Upper lobe of right lung (tissue), 1 donor: ENCODE measurements at regions of chr3 and their contacts with region 1.

Region 1: DNA sequence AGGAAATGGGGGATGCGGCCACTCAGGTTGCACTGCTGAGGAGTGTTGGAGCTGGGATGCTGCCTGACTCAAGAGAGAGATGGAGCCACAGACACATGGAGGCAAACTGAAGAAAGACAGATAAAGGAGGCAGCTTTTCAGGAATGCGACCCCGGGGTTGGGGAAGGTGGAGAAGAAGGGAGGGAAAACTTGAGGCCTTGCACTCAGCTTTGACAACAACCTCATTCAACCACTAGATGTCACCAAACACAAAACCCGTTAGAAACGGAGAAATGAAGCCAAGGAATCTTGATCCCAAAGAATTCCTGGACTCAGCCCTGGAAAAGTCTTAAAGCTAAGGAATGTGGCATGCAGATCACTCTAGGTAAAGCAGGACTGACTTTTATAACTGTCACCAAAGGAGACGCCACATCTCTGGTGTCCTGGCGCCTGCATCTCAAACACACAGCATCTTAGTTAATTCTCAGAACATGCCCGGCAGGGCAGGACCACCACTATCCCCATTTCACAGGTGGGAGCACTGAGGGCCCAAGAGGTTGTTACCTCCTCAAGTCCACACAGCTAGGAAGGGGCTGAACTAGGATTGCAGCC is 59.6 kb upstream of the LMCD1 start:
- DNase-seq: no peak
- ATAC-seq: peak; percentile 51
- H3K4me3 ChIP-seq: no peak overlapping the region
- H3K27ac ChIP-seq: peak overlapping the region; percentile 86
- H3K4me1 ChIP-seq: peaks cover 26% of the 10 kb centered on the region
- H3K27me3 ChIP-seq: no peaks in the 10 kb centered on the region
- CTCF ChIP-seq: peak; percentile 73

Region 2: GRCh38 chr3:8183627-8184026 is 258.4 kb before region 1 on chr3:
- intact Hi-C with region 1: no loop called
- DNase-seq: no peak
- ATAC-seq: no peak
- H3K4me3 ChIP-seq: no peak overlapping the region
- H3K27ac ChIP-seq: no peak overlapping the region
- H3K4me1 ChIP-seq: no peaks in the 10 kb centered on the region
- H3K27me3 ChIP-seq: no peaks in the 10 kb centered on the region
- CTCF ChIP-seq: no peak

Region 3: GRCh38 chr3:8607234-8608040 is 165.4 kb after region 1 on chr3:
- intact Hi-C with region 1: loop called (anchors 5 kb)
- DNase-seq: no peak
- ATAC-seq: peak; percentile 87
- H3K4me3 ChIP-seq: no peak overlapping the region
- H3K27ac ChIP-seq: no peak overlapping the region
- H3K4me1 ChIP-seq: peaks cover 16% of the 10 kb centered on the region
- H3K27me3 ChIP-seq: no peaks in the 10 kb centered on the region
- CTCF ChIP-seq: peak; percentile 68

Region 4: GRCh38 chr3:8622873-8623691 is 181.0 kb after region 1 on chr3:
- intact Hi-C with region 1: loop called (anchors 5 kb)
- DNase-seq: peak; percentile 78
- ATAC-seq: peak; percentile 85
- H3K4me3 ChIP-seq: no peak overlapping the region
- H3K27ac ChIP-seq: no peak overlapping the region
- H3K4me1 ChIP-seq: peaks cover 8% of the 10 kb centered on the region
- H3K27me3 ChIP-seq: no peaks in the 10 kb centered on the region
- CTCF ChIP-seq: peak; percentile 90